ENCODE measurements at regions of chr3 and their contacts with region 1.

Region 1: DNA sequence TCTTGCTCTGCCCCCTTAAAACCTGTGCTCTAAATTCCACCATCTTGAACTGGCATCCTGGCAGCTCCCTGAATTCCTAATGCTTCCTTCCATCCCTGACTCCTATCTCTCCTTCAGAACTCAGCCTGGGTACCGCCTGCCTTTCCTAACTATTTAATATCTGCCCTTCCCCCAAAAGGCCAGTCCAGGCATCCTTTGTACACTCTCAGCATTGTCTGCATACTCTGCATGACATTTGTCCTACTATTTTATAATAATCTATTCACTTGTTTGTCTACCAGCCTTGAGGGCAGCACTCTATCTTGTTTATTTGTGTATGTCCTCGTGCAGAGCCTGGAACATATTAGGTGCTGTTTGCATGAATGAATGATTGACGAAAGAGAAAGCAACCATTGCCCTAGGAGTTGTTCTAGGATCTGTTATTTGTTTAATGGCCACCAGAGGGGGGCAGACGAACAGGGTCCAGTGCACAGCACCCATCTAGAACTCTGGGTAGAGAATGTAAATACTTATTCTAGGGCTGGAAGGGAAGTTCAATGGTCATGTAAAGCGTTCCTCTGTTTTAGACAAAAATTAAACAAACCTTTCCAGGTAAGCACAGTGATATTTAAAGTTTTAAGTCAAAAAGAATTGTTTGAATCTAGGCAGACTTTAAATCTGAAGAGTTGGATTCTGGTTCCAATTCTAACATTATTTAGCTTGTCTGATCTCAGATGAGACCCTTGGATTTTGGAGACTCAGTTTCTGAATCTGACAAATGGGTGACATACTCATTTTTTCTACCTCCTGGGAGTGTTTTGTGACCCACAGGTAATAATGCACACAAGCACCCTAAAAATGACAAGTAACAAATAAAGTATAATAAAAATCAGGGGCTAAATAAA is 125.8 kb upstream of the GALNT15 start:
- DNase-seq: peak; percentile 62
- H3K4me3 ChIP-seq: peak overlapping the region; percentile 31
- H3K27ac ChIP-seq: no peak overlapping the region
- H3K4me1 ChIP-seq: no peaks in the 10 kb centered on the region
- CTCF ChIP-seq: peak; percentile 91

Region 2: DNA sequence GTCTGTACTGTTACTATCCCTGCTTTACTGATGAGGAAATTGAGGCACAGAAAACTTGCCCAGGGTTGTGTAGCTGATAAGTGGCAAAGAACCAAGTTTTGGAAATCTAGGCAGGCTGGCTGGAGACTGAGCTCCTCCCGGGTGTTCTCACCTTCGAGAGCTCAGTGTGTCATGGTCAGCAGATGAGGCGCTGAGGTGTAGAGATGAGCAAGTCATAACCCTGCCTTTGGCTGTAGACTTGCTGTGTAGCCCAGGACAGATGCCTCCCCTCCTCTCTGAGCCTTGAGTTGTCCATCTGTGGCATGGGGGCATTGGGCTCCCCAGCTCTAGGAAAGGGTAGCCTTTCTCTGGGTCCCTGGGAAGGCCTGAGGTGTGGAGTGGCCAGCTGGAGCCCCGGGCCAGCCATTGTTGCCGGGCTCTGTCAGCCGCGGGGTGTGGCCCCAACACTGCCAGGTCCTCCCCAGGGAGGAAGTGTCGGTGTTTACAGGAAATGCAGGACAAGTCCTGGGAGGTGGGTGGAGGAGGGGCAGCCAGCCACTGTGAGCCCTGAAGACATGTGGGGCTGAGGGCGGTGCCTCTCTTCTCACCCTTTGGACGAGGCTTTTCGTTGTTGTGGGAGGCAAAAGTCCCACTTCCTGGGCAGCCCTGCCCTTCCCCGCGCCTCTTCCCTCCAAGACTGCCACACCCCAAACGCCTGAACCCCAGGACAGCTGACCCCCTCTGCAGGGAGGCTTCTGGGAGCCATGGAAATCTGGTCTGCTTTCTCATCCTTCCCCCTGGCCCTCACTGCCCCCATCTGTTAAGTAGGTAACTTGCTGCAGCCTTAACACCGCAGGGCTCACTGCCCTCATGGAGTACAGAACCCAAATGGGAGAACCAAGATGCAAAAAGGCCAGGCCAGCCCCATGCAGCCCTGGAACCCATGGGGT is 1200.8 kb before region 1 on chr3:
- CTCF ChIA-PET with region 1: no interaction called
- POLR2A ChIA-PET with region 1: no interaction called
- intact Hi-C with region 1: no loop called
- DNase-seq: peak; percentile 40
- H3K4me3 ChIP-seq: no peak overlapping the region
- H3K27ac ChIP-seq: no peak overlapping the region
- H3K4me1 ChIP-seq: peaks cover 9% of the 10 kb centered on the region
- CTCF ChIP-seq: no peak

Region 3: GRCh38 chr3:15629860-15630597 is 418.6 kb before region 1 on chr3:
- CTCF ChIA-PET with region 1: no interaction called
- POLR2A ChIA-PET with region 1: no interaction called
- intact Hi-C with region 1: loop called (anchors 10 kb)
- DNase-seq: peak; percentile 87
- H3K4me3 ChIP-seq: peak overlapping the region; percentile 35
- H3K27ac ChIP-seq: no peak overlapping the region
- H3K4me1 ChIP-seq: peaks cover 10% of the 10 kb centered on the region
- CTCF ChIP-seq: peak; percentile 94

Region 4: GRCh38 chr3:15815696-15816095 is 233.0 kb before region 1 on chr3:
- CTCF ChIA-PET with region 1: no interaction called
- POLR2A ChIA-PET with region 1: no interaction called
- intact Hi-C with region 1: loop called (anchors 5 kb)
- DNase-seq: peak; percentile 59
- H3K4me3 ChIP-seq: no peak overlapping the region
- H3K27ac ChIP-seq: no peak overlapping the region
- H3K4me1 ChIP-seq: peaks cover 30% of the 10 kb centered on the region
- CTCF ChIP-seq: peak; percentile 78

Region 5: DNA sequence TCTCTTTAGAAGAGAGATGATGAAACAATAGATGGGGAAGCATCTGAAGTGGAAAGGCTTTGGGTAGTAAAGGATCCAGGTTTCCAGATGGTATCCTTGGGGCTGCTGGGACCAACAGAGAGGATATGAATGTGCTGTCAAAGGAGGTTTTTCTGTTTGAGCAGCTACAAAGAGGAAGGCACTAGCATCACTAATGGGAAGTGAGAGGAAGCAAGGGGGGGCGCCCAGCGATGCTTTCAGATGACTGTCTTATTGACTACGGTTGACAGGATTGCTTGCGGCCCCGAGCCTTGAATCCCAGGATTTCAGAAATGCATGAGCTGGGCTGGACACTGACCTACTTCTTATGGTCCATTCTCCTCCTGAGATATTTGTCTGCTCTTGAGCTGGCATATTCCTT is 22.0 kb after region 1 on chr3:
- CTCF ChIA-PET with region 1: no interaction called
- POLR2A ChIA-PET with region 1: no interaction called
- intact Hi-C with region 1: no loop called
- DNase-seq: no peak
- H3K4me3 ChIP-seq: no peak overlapping the region
- H3K27ac ChIP-seq: no peak overlapping the region
- H3K4me1 ChIP-seq: no peaks in the 10 kb centered on the region
- CTCF ChIP-seq: no peak

Region 6: GRCh38 chr3:16177962-16178627 is 129.4 kb after region 1 on chr3:
- CTCF ChIA-PET with region 1: no interaction called
- POLR2A ChIA-PET with region 1: no interaction called
- intact Hi-C with region 1: loop called (anchors 1 kb)
- DNase-seq: peak; percentile 53
- H3K4me3 ChIP-seq: no peak overlapping the region
- H3K27ac ChIP-seq: no peak overlapping the region
- H3K4me1 ChIP-seq: no peaks in the 10 kb centered on the region
- CTCF ChIP-seq: peak; percentile 92

Region 7: DNA sequence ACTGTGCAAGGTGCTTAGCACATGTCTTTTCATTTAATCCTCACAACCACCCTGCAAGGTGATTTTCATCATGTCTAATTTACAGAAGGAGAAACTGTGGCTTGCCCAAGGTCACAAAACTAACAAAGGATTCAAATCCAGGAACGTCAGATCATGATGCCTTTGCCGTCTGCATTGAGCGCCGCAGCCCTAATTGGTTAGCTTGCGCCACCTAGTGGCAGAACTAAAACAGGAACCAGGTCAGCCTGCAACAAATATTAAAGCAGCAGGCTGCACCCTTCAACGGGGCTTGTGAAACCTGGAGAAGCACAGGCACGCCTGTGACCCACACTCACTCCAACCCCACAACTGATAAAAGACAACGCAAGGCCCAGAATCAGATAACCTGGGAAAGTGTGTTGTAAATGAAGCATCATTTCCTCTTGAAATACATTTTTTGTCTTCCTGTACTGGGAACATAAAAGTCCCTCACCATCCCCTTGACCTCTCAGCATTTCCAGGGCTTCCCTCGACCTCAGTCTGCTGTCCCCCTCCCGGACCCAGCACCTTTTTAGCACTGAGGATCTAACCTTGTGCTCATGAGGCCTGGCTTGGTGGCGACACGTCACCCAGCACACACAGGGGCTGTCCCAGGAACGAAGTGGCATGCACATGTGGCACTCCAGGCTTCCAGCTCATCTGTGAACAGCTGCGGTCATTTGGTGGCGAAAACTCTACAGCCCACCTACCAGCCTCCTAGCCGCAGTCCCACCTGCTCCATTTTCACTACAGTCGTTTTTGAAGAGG is 198.8 kb after region 1 on chr3:
- CTCF ChIA-PET with region 1: no interaction called
- POLR2A ChIA-PET with region 1: no interaction called
- intact Hi-C with region 1: loop called (anchors 1 kb)
- DNase-seq: peak; percentile 88
- H3K4me3 ChIP-seq: no peak overlapping the region
- H3K27ac ChIP-seq: no peak overlapping the region
- H3K4me1 ChIP-seq: peaks cover 6% of the 10 kb centered on the region
- CTCF ChIP-seq: peak; percentile 97

Region 8: GRCh38 chr3:16550676-16551341 is 502.1 kb after region 1 on chr3:
- CTCF ChIA-PET with region 1: no interaction called
- POLR2A ChIA-PET with region 1: no interaction called
- intact Hi-C with region 1: loop called (anchors 2 kb)
- DNase-seq: peak; percentile 92
- H3K4me3 ChIP-seq: no peak overlapping the region
- H3K27ac ChIP-seq: no peak overlapping the region
- H3K4me1 ChIP-seq: peaks cover 17% of the 10 kb centered on the region
- CTCF ChIP-seq: peak; percentile 97

Region 9: GRCh38 chr3:17088602-17089313 is 1040.1 kb after region 1 on chr3:
- CTCF ChIA-PET with region 1: no interaction called
- POLR2A ChIA-PET with region 1: interaction called, 10 read pairs
- intact Hi-C with region 1: no loop called
- DNase-seq: no peak
- H3K4me3 ChIP-seq: no peak overlapping the region
- H3K27ac ChIP-seq: no peak overlapping the region
- H3K4me1 ChIP-seq: no peaks in the 10 kb centered on the region
- CTCF ChIP-seq: no peak

Measured in OCI-LY7 (cell line).